SK-N-SH (cell line): ENCODE measurements at regions of chr11 and their contacts with region 1.

Region 1: DNA sequence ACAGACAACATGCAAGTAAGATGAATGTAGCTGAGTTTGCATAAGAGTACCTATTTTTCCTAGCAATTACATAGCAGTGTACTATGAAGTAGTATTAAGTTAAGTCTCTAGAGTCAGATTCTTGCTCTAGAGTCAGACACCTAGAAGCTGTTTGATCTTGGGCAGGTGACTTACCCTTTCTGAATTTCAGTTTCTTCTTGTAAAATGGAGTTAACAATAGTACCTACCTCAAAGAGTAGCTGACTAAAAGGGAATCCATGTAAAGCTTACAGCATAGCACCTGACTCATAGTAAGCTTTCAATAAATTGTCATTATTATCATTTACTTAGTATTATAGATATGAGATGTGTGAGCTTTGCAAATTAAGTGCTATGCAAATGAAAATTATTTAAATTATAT is 47.8 kb upstream of the PTPRJ start:
- DNase-seq: no peak
- H3K4me3 ChIP-seq: no peak overlapping the region
- H3K27ac ChIP-seq: peak overlapping the region in 1 of 2 experiments; percentile 71; a peak in 1 of 4 replicates
- H3K4me1 ChIP-seq: no peaks in the 10 kb centered on the region
- H3K27me3 ChIP-seq: no peaks in the 10 kb centered on the region
- CTCF ChIP-seq: no peak
- EP300 ChIP-seq: no peak
- RAD21 ChIP-seq: no peak

Region 2: DNA sequence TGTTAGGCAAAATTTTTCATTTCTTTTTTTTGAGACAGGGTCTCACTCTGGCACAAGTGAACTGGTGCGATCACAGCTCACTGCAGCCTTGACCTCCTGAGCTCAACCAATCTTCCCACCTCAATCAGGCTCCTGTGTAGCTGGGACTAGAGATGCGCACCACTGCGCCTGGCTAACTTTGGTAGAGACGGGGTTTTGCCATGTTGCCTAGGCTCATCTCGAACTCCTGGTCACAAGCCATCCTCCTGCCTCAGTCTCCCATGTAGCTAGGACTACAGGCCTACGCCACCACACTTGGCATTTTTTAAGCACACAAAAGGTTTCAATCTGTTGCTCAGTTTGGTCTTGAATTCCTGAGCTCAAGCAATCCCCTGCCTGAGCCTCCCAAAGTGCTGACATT is 174.5 kb before region 1 on chr11:
- CTCF ChIA-PET with region 1: no interaction called
- POLR2A ChIA-PET with region 1: no interaction called
- DNase-seq: no peak
- H3K4me3 ChIP-seq: no peak overlapping the region
- H3K27ac ChIP-seq: no peak overlapping the region
- H3K4me1 ChIP-seq: no peaks in the 10 kb centered on the region
- H3K27me3 ChIP-seq: no peaks in the 10 kb centered on the region
- CTCF ChIP-seq: no peak
- EP300 ChIP-seq: no peak
- RAD21 ChIP-seq: no peak

Region 3: GRCh38 chr11:47917643-47918369 is 14.7 kb before region 1 on chr11:
- CTCF ChIA-PET with region 1: interaction called, 39 read pairs
- POLR2A ChIA-PET with region 1: interaction called, 3 read pairs
- DNase-seq: peak; percentile 67
- H3K4me3 ChIP-seq: 0 out of 4 replicates have a peak overlapping the region, but pooled peaks of 1 of the 2 experiments have one; percentile 16
- H3K27ac ChIP-seq: peak overlapping the region; percentile 68 to 70
- H3K4me1 ChIP-seq: peaks cover 35 to 46% of the 10 kb centered on the region in 2 experiments
- H3K27me3 ChIP-seq: no peaks in the 10 kb centered on the region
- CTCF ChIP-seq: no peak
- EP300 ChIP-seq: peak in 1 of 2 experiments; percentile 64; a peak in 1 of 4 replicates
- RAD21 ChIP-seq: no peak; the same call in none of the 2 replicates

Region 4: GRCh38 chr11:47946682-47947575 is 14.4 kb after region 1 on chr11:
- CTCF ChIA-PET with region 1: interaction called, 32 read pairs
- POLR2A ChIA-PET with region 1: no interaction called
- DNase-seq: no peak
- H3K4me3 ChIP-seq: no peak overlapping the region
- H3K27ac ChIP-seq: peak overlapping the region in 1 of 2 experiments; percentile 83; a peak in 2 of 4 replicates
- H3K4me1 ChIP-seq: peaks cover 0 to 11% of the 10 kb centered on the region in 2 experiments; a peak in 2 of 4 replicates
- H3K27me3 ChIP-seq: no peaks in the 10 kb centered on the region
- CTCF ChIP-seq: no peak
- EP300 ChIP-seq: peak; percentile 7 to 90; a peak in 2 of 4 replicates
- RAD21 ChIP-seq: no peak

Region 5: DNA sequence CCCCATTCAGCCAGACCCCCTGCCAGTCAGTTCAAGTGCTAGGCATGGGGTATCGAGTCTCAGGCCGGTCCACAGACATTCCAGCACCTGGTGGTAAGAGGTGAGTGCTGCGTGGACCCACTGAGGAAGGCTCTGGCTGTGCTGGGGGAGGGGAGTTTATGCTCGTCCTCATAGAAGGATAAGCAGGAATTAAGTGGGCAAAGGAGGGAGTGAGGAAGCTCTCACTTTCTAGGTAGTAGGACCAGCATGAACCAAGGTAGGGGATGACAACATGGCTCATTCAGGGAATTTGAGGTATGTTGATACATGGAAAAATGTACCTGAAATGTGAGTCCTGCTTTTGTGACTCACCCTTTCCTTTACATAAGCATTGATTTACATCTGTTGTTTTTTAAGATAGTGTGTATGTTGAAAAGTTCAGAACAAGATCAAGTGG is 164.5 kb after region 1 on chr11:
- CTCF ChIA-PET with region 1: interaction called, 47 read pairs
- POLR2A ChIA-PET with region 1: no interaction called
- DNase-seq: no peak
- H3K4me3 ChIP-seq: no peak overlapping the region
- H3K27ac ChIP-seq: no peak overlapping the region
- H3K4me1 ChIP-seq: peaks cover 0 to 27% of the 10 kb centered on the region in 2 experiments; a peak in 1 of 4 replicates
- H3K27me3 ChIP-seq: no peaks in the 10 kb centered on the region
- CTCF ChIP-seq: no peak
- EP300 ChIP-seq: no peak
- RAD21 ChIP-seq: no peak